ENCODE measurements at regions of chr13 and their contacts with region 1.

Region 1: DNA sequence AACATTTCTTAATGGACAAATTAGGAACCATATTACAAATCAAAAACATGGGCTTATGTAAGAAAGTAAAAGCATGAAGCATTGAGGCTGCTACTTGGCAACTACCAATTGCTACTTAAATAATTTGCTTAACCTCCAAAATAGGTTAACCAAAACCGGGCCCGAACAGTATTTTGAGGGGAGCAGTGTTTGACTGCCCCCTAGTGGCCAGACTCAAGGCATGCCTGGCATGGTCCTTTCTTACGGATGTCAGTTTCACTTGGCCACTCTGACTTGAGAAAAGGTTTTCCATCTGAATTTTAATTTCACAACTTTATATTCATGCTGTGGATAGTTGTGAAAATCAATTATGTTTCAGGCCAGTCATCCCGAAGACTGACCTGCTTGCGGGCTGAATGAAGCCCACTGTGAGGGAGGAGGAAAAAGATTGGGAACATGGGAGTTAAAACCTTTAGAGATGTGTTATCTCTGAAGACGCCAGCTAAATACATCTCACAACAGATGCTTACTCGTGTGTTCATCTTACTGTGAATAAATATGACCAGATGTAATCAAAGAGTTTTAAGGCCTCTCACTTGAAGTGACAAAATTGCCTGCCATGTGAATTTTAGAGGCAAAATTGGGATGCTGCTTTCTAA is 2.9 kb downstream of the RXFP2 start:
- H3K4me3 ChIP-seq: no peak overlapping the region
- H3K27ac ChIP-seq: no peak overlapping the region
- H3K4me1 ChIP-seq: no peaks in the 10 kb centered on the region
- CTCF ChIP-seq: peak; percentile 24; the same call in 1 of the 2 replicates

Region 2: GRCh38 chr13:31431722-31432137 is 310.5 kb before region 1 on chr13:
- CTCF ChIA-PET with region 1: interaction called, 14 read pairs
- POLR2A ChIA-PET with region 1: no interaction called
- H3K4me3 ChIP-seq: no peak overlapping the region
- H3K27ac ChIP-seq: no peak overlapping the region
- H3K4me1 ChIP-seq: no peaks in the 10 kb centered on the region
- CTCF ChIP-seq: no peak

Region 3: GRCh38 chr13:31965361-31966066 is 223.3 kb after region 1 on chr13:
- CTCF ChIA-PET with region 1: no interaction called
- POLR2A ChIA-PET with region 1: no interaction called
- H3K4me3 ChIP-seq: no peak overlapping the region
- H3K27ac ChIP-seq: no peak overlapping the region
- H3K4me1 ChIP-seq: no peaks in the 10 kb centered on the region
- CTCF ChIP-seq: no peak